ENCODE measurements at regions of chr6 and their contacts with region 1.

Region 1: GRCh38 chr6:109009236-109009961 is 85.2 kb downstream of the SESN1 start:
- DNase-seq: peak; percentile 92 to 98
- ATAC-seq: peak; percentile 92

Region 2: DNA sequence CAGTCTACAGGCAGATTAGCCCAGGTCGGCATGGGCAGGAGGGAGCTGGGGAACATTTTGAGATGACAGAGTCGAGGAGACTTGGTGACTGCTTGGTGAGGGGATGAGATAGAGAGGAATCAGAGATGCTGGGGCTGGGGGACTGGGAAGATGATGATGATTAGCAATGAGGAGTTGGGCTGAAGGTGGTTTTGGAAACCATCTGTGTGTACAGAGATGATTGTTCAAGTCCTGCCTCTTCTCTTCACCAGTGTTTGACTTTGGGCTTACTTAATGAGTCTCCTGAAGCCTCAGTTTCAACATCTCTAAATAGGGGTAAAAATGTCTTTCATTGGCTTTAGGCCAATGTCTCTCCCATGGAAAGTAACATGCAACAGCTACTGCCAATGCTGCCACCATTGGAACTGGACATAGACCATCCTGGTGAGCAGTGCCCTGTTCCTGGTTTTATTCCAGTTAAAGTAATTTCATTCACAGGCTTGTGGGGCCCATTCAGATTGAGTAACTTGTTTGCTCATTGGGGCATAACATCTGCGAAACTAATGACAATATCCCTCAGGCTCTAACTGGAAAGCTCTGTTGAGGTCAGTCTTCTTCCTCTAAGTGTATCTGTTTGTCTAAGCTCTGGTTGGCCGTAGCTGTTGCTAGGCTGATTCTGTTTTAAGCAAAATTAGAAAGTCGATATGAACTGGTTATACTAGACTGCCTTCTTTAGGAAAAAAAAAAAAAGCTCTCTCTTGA is 62.1 kb before region 1 on chr6:
- intact Hi-C with region 1: loop called in 1 of 2 experiments (anchors 10 kb)
- DNase-seq: no peak
- ATAC-seq: peak; percentile 16

Measured in left colon (tissue), 2 donors.